Activated naive CD4-positive, alpha-beta T cell treated with anti-CD3 and anti-CD28 coated beads for 36 hours (primary cell): ENCODE measurements at regions of chr2 and their contacts with region 1.

Region 1: GRCh38 chr2:84022810-84023431 is 436.2 kb downstream of the SUCLG1 start:
- DNase-seq: peak; percentile 18
- H3K4me3 Mint-ChIP-seq: no peak overlapping the region
- H3K27ac Mint-ChIP-seq: no peak overlapping the region
- H3K4me1 Mint-ChIP-seq: no peaks in the 10 kb centered on the region
- H3K27me3 Mint-ChIP-seq: no peaks in the 10 kb centered on the region

Region 2: GRCh38 chr2:84077492-84077891 is 54.6 kb after region 1 on chr2:
- CTCF ChIA-PET with region 1: no interaction called
- intact Hi-C with region 1: loop called (anchors 5 kb)
- DNase-seq: peak; percentile 39
- H3K4me3 Mint-ChIP-seq: no peak overlapping the region
- H3K27ac Mint-ChIP-seq: no peak overlapping the region
- H3K4me1 Mint-ChIP-seq: no peaks in the 10 kb centered on the region
- H3K27me3 Mint-ChIP-seq: peaks cover 2% of the 10 kb centered on the region

Region 3: DNA sequence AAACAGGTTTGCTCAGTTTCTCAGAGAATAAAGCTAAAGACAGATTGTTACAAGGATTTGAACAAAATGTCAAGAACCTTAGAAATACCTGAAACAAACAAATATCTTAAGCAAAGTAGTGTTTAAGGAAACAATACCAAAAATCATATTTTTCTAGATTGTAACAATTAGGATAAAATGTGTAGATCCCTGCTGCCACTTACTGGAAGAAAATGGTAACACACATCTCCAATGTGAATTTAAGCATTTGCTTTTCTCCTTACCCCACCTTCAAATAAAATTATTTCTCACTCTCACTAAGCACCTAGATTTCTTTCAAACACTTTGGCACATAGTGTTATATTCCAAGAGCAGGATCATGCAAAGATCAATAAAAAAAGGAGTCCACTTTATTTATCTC is 401.2 kb after region 1 on chr2:
- CTCF ChIA-PET with region 1: no interaction called
- intact Hi-C with region 1: loop called (anchors 10 kb)
- DNase-seq: no peak
- H3K4me3 Mint-ChIP-seq: no peak overlapping the region
- H3K27ac Mint-ChIP-seq: no peak overlapping the region
- H3K4me1 Mint-ChIP-seq: no peaks in the 10 kb centered on the region
- H3K27me3 Mint-ChIP-seq: no peaks in the 10 kb centered on the region

Region 4: DNA sequence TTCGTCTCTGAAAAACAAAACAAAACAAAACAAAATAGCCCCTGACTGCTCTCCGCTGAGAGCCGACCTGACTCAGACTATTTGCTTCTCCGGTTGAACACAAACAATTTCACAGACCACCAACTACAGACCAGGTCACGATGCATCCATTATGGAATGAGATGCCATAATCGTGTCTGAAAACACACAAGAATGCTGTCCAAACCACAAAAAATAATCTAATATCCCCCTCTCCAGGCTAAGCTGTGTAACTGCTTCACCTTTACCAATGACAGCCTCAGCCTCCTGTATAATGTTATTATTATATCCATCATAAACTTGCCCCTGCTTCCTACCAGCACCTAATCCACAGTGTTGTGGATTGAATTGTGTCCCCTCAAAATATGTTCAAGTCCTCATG is 608.1 kb after region 1 on chr2:
- CTCF ChIA-PET with region 1: no interaction called
- intact Hi-C with region 1: loop called (anchors 10 kb)
- DNase-seq: no peak
- H3K4me3 Mint-ChIP-seq: no peak overlapping the region
- H3K27ac Mint-ChIP-seq: no peak overlapping the region
- H3K4me1 Mint-ChIP-seq: peaks cover 12% of the 10 kb centered on the region
- H3K27me3 Mint-ChIP-seq: no peaks in the 10 kb centered on the region